ENCODE measurements at regions of chr18 and their contacts with region 1.

Region 1: DNA sequence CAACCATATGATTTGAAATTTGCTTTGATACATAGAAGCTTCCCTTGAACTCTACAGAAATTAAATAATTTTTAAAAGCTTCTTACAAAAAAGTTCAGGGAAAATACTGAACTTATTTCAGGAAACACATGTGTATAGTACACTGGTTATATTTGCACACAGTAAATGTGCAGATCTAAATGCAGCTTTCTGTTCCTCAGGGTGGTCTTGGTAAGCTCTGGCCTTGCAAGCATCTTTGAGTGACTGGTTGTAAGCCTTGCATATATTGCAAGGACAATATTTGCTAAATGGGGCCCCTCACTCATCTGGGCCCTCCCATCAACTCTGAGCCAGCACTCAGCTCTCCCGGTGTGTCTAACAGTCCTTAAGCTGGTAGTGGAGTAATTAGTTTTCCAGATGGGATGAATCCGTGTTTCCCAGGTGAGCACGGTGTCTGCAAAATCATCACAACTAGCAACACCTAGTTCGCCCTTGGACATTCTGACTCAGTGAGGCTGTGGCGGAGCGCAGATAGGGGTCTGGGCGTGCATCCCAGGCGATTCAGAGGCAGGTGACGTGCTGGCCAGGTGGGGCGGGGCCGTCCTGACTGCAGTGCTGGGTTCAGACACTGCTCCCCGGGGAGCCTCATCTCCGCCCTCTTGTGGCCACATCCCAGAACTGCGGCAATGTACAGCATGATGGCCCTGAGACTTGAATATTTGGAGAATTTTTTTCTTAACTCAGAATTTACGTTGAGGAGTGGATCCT is 149.6 kb downstream of the MBP start:
- DNase-seq: peak; percentile 91
- CTCF ChIP-seq: peak; percentile 92

Region 2: DNA sequence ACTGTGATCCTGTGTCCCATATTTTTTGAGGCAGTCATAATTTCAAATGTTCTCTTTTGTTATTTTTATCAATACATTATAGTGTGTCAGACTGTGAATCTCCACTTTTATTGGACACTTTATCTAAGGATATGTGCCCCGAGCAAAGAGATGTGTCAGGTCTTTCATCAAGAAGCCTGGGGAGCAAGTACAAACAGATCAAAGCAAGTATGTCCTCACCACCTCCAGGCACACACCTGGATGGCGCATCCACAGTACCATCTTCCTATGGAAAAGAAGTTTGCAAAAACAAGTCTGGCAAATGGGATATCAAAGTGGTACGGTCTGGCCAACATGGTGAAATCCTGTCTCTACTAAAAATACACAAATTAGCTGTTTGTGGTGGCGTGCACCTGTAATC is 241.6 kb before region 1 on chr18:
- CTCF ChIA-PET with region 1: no interaction called
- POLR2A ChIA-PET with region 1: no interaction called
- DNase-seq: no peak
- CTCF ChIP-seq: no peak

Region 3: DNA sequence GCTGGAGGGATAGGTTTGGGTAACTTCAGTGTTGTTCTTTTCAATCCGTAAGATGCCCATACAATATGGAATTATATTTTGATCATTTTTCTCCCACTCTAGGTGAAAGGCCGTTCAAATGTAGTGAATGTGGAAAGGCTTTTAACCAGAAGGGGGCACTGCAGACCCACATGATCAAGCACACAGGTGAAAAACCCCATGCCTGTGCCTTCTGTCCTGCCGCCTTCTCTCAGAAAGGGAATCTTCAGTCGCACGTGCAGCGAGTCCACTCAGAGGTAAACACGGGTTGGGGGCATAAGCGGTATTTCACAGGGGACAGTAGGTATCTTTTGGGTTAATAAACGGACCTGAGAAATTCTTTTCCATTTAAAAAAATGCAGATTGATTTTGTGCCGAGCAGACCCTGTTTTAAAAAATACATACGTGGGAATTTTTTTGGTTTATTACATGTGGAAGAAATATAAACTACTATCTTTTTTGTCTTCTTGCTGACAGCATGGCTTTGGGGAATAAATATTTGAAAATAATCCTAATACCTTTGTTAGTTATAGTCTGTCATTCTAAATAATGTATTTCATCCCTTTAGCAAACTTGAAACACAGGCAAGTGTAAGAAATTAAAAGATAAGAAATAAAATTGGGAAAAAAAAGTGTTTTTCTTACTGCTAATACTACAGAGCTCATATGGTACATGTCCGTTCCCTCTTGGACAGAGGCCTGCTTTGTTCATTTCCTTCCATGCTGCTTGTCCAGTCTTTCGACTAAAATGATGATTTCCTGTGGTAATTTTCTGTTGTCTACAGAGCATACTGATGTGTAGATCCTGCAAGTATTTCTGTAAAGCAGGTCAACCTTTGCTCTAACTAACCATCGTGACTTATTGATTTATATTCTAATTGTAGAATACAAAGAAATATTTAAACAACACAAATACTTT is 107.4 kb before region 1 on chr18:
- CTCF ChIA-PET with region 1: interaction called, 18 read pairs
- POLR2A ChIA-PET with region 1: no interaction called
- DNase-seq: peak; percentile 50
- CTCF ChIP-seq: peak; percentile 71

Region 4: DNA sequence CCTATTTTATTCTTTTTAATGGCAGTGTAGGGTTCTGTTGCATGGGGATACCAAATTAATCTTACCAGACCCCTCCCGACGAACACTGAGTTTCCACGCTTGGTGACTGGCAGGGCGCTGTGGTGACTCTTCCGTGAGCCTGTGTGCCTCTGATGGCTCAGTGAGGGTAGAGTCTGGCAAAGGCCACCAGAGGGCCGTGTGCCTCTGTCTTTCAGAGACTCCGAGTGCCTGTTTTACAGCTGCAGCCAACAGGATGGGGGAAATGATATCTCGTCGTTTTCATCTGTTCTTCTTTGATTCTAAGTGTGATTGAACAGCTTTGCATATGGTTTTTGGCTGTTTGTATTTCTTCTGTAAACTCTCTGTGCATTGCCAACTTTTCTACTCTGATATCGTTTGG is 60.9 kb before region 1 on chr18:
- CTCF ChIA-PET with region 1: interaction called, 190 read pairs
- POLR2A ChIA-PET with region 1: no interaction called
- DNase-seq: peak; percentile 80
- CTCF ChIP-seq: peak; percentile 80

Region 5: GRCh38 chr18:76948345-76948744 is 34.7 kb before region 1 on chr18:
- CTCF ChIA-PET with region 1: interaction called, 18 read pairs
- POLR2A ChIA-PET with region 1: no interaction called
- DNase-seq: no peak
- CTCF ChIP-seq: no peak

Region 6: DNA sequence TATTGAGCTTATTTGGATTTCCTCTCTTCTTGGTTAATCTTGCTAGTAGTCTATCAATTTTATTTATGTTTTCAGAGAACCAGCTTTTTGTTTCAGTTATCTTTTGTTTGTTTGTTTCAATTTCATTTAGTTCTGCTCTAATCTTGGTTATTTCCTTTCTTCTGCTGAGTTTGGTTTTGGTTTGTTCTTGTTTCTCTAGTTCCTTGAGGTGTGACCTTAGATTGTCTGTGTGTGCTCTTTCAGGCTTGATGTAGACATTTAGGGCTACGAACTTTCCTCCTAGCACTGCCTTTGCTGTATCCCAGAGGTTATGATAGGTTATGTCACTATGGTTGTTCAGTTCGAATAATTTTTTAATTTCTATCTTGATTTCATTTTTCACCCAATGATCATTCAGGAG is 19.1 kb before region 1 on chr18:
- CTCF ChIA-PET with region 1: interaction called, 40 read pairs
- POLR2A ChIA-PET with region 1: interaction called, 3 read pairs
- DNase-seq: no peak
- CTCF ChIP-seq: no peak

Region 7: GRCh38 chr18:77013811-77014521 is 31.0 kb after region 1 on chr18:
- CTCF ChIA-PET with region 1: interaction called, 11 read pairs
- POLR2A ChIA-PET with region 1: no interaction called
- DNase-seq: no peak
- CTCF ChIP-seq: no peak

Region 8: GRCh38 chr18:77039196-77040130 is 56.4 kb after region 1 on chr18:
- CTCF ChIA-PET with region 1: no interaction called
- POLR2A ChIA-PET with region 1: no interaction called
- DNase-seq: no peak
- CTCF ChIP-seq: no peak